ENCODE measurements at regions of chr20 and their contacts with region 1.

Region 1: DNA sequence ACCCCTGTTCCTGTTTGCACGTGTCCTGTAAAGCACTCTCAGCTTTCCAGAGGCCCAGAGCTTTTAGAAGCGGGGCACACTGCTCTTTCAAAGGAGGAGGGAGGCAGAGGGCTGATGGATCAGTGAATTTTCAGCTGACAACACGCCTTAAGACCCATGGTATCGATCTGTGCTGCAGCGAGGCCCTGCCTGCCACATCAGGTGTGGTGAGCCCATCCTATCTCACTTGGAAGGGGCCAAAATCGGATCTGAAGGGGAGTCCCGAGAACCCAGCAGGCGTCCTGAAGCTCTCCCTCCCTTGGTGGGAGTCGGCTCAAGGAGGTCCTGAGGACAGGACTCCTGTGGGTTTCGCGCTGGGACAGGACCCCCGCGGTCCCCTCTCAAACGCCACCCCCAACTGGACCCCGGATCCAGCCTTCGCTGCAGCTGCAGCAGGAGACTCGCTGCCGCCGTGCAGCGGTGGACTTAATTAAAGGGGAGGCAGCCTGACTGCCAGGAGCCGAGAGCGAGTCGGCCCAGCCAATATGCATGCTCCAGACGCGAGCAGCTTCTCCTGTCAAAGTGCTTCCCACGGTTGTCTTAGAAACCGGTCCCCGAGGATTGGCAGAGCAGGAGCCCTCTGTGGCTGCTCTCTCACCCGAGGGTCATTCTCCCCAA is 580.0 kb upstream of the ZNF337 start:
- DNase-seq: no peak
- H3K4me3 ChIP-seq: no peak overlapping the region
- H3K27ac ChIP-seq: no peak overlapping the region
- H3K4me1 ChIP-seq: no peaks in the 10 kb centered on the region
- H3K27me3 ChIP-seq: no peaks in the 10 kb centered on the region
- CTCF ChIP-seq: no peak

Region 2: DNA sequence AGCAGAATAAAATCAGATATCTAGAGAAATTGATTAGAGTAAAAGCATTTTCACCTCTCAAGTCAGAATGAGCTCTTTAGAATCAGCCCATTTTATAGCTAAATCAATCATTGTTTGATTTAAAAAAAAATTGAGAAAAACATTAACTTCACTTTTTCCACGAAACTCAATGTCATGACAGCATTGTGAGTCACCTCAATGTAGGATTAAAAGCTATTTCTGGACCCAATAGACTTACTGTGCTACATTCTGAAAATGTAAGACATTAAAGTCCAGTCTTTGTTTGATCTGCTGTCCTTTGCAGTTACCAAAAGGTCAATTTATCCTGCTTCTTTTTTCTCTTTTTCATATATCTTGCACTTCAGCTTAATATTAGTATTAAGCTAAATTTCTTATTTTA is 60.7 kb before region 1 on chr20:
- CTCF ChIA-PET with region 1: no interaction called
- POLR2A ChIA-PET with region 1: no interaction called
- intact Hi-C with region 1: loop called (anchors 10 kb)
- DNase-seq: no peak
- H3K4me3 ChIP-seq: no peak overlapping the region
- H3K27ac ChIP-seq: no peak overlapping the region
- H3K4me1 ChIP-seq: no peaks in the 10 kb centered on the region
- H3K27me3 ChIP-seq: peaks cover 58% of the 10 kb centered on the region
- CTCF ChIP-seq: no peak

Region 3: DNA sequence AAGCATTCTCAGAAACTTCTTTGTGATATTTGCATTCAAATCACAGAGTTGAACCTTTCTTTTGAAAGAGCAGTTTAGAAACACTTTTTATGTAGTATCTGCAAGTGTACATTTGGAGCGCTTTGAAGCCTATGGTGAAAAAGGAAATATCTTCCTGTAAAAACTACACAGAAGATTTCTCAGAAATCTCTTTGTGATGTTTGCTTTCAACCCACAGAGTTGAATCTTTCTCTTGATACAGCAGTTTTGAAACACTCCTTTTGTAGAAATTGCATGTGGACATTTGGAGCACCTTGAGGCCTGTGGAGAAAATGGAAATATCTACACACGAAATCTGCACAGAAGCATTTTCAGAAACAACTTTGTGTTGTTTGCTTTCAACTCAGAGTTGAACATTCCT is 32.3 kb after region 1 on chr20:
- CTCF ChIA-PET with region 1: no interaction called
- POLR2A ChIA-PET with region 1: no interaction called
- intact Hi-C with region 1: no loop called
- DNase-seq: no peak
- H3K4me3 ChIP-seq: no peak overlapping the region
- H3K27ac ChIP-seq: no peak overlapping the region
- H3K4me1 ChIP-seq: no peaks in the 10 kb centered on the region
- H3K27me3 ChIP-seq: no peaks in the 10 kb centered on the region
- CTCF ChIP-seq: no peak

Measured in A673 (cell line).